ENCODE measurements at regions of chr15 and their contacts with region 1.

Region 1: DNA sequence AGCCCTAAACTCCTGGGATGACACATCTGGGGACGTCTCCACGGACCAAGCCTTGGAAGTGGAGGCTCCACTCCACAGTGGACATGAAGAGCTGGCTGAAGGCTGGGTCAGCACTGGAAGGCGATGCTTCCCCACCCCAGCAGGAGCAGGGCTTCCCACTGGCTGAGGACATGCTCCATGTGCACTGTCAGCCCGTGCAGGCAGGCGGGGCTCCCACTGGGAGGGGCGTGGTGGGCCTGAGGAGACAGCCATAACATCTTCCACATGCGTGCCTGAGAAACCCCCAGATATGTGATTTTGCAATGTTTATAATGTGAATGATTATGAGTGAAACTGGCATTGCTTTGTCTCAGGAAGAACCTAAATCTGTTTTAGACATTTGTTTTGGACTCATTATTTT is 231.3 kb downstream of the KLF13 start:
- DNase-seq: no peak
- ATAC-seq: no peak
- H3K4me3 ChIP-seq: no peak overlapping the region
- H3K27ac ChIP-seq: no peak overlapping the region
- H3K4me1 ChIP-seq: no peaks in the 10 kb centered on the region
- H3K27me3 ChIP-seq: no peaks in the 10 kb centered on the region
- CTCF ChIP-seq: no peak
- EP300 ChIP-seq: no peak
- POLR2A ChIP-seq: no peak
- RAD21 ChIP-seq: no peak

Region 2: DNA sequence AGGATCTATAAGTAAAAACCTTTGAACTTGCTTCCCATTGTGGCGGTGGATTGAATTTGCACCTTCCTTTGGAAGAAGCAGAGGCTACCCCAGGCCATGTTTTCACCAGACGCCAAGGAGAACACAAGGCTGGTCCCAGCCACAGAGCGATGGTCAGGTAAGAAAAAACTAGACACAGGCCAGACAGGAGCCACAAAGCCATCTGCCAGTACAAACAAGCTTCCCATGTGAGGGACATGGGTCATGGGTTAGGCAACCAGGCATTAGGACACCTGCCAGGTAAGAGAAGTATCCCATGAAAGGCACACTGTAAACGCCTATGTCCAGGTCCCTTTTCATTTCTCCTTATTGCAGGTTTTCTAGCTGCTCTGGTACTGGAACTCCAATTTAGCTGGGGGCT is 41.0 kb before region 1 on chr15:
- CTCF ChIA-PET with region 1: no interaction called
- POLR2A ChIA-PET with region 1: no interaction called
- RAD21 ChIA-PET with region 1: no interaction called
- SMC1A ChIA-PET with region 1: no interaction called
- in situ Hi-C with region 1: no loop called
- intact Hi-C with region 1: loop called (anchors 5 kb)
- DNase-seq: no peak
- ATAC-seq: no peak
- H3K4me3 ChIP-seq: no peak overlapping the region
- H3K27ac ChIP-seq: no peak overlapping the region
- H3K4me1 ChIP-seq: no peaks in the 10 kb centered on the region; the same call in 1 of the 2 replicates
- H3K27me3 ChIP-seq: no peaks in the 10 kb centered on the region
- CTCF ChIP-seq: no peak
- EP300 ChIP-seq: no peak
- POLR2A ChIP-seq: no peak
- RAD21 ChIP-seq: no peak